PC-9 (cell line): ENCODE measurements at regions of chr16 and their contacts with region 1.

Region 1: GRCh38 chr16:75519881-75520280 is 16.0 kb downstream of the CHST5 start:
- DNase-seq: no peak
- H3K4me3 ChIP-seq: no peak overlapping the region
- H3K27ac ChIP-seq: no peak overlapping the region
- H3K4me1 ChIP-seq: 0 out of 2 replicates have a peak, but pooled peaks cover 6% of the 10 kb centered on the region
- H3K27me3 ChIP-seq: no peaks in the 10 kb centered on the region
- CTCF ChIP-seq: no peak

Region 2: DNA sequence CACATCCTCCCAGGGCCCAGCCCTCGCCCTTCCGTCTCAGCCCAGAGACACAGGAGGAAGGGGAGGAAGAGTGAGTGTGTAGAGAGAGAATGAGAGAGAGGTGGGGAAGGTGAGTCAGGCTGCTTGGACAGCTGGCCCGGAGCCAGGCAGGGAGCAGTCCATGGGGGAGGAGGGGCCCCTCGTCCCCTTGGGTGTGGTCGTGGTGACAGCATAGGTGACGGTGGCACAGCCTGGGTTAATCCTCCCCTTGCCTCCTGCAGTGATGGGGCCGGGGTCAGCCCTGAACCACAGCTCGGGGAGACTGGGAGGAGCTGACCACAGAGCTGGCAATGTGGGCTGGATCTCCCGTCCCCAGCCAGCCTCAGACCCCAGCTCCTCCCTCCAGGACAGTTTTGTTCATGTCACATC is 781.7 kb before region 1 on chr16:
- CTCF ChIA-PET with region 1: interaction called, 20 read pairs
- POLR2A ChIA-PET with region 1: no interaction called
- intact Hi-C with region 1: no loop called
- DNase-seq: peak; percentile 83 to 89
- H3K4me3 ChIP-seq: peak overlapping the region; percentile 15; the same call in 1 of the 2 replicates
- H3K27ac ChIP-seq: peak overlapping the region; percentile 71
- H3K4me1 ChIP-seq: peaks cover 63% of the 10 kb centered on the region
- H3K27me3 ChIP-seq: no peaks in the 10 kb centered on the region
- CTCF ChIP-seq: no peak

Region 3: DNA sequence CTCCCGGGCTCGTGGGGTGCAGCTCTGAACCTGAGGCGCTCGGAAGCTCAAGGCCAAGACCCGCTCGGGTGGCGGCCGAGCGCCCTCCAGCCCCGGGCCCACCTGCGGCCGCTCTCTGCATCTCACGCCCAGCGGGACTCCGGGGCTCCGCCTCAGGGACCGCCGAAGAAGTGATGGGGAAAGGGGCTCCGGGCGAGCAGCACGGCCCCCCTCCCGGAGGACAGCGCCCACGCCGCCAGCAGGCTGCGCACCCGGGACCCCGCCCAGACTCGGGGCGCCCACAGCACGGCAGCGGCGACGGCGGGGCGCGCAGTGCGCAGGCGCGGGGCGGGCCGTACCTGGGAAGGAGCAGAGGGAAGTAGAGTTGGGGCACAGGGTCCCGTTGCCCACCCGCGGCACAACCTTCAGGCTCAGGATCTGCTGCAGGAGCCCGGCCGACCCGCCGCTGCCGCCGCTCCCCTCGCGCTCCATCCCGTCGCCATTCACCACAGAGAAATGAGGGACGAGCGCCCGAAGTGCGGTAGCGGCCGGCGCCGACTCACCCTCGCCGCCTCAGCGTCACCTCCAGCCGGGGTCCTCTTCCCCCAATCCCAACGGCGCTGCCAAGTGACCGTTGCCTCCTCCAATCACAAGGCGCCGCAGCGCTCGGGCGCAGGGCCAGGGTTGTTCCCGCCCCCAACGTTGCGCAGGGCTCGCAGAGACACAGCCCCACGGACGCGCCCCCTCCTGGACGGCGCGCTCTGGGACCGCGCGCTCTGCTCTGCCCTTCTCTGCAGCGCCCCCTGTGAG is 55.6 kb before region 1 on chr16 and contains the start of gene TMEM170A:
- CTCF ChIA-PET with region 1: interaction called, 7 read pairs
- POLR2A ChIA-PET with region 1: no interaction called
- intact Hi-C with region 1: loop called (anchors 1 kb)
- DNase-seq: peak; percentile 91 to 99
- H3K4me3 ChIP-seq: peak within 1 kb of the TSS; percentile 61
- H3K27ac ChIP-seq: peak within 1 kb of the TSS; percentile 45
- H3K4me1 ChIP-seq: peaks cover 18% of the 10 kb centered on the region
- H3K27me3 ChIP-seq: no peaks in the 10 kb centered on the region
- CTCF ChIP-seq: peak; percentile 100
- total RNA-seq, gene TMEM170A: 31.4 and 31.7 TPM in 2 replicates

Region 4: DNA sequence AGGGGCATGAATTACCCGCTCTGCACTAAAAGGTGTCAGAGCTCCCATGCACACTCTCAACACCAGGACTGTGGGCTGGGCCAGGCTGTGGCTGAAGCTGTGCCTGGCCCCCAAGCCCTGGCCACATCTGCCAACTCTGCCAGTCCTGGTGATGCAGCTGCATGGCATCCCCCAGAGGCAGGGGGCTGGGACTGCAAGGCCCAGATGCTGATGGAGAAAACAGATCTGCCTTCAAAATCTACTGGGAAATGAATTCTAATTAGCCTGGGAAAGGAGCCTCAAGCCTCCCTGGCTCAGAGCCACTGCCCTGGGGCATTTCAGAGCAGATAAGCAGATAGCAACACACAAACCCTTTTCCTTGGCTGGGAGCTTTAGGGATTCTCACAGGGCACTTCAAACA is 28.0 kb before region 1 on chr16:
- CTCF ChIA-PET with region 1: interaction called, 3 read pairs
- POLR2A ChIA-PET with region 1: interaction called, 4 read pairs
- intact Hi-C with region 1: loop called (anchors 1 kb)
- DNase-seq: peak; percentile 77 to 88
- H3K4me3 ChIP-seq: no peak overlapping the region
- H3K27ac ChIP-seq: no peak overlapping the region
- H3K4me1 ChIP-seq: peaks cover 24% of the 10 kb centered on the region
- H3K27me3 ChIP-seq: no peaks in the 10 kb centered on the region
- CTCF ChIP-seq: peak; percentile 52

Region 5: DNA sequence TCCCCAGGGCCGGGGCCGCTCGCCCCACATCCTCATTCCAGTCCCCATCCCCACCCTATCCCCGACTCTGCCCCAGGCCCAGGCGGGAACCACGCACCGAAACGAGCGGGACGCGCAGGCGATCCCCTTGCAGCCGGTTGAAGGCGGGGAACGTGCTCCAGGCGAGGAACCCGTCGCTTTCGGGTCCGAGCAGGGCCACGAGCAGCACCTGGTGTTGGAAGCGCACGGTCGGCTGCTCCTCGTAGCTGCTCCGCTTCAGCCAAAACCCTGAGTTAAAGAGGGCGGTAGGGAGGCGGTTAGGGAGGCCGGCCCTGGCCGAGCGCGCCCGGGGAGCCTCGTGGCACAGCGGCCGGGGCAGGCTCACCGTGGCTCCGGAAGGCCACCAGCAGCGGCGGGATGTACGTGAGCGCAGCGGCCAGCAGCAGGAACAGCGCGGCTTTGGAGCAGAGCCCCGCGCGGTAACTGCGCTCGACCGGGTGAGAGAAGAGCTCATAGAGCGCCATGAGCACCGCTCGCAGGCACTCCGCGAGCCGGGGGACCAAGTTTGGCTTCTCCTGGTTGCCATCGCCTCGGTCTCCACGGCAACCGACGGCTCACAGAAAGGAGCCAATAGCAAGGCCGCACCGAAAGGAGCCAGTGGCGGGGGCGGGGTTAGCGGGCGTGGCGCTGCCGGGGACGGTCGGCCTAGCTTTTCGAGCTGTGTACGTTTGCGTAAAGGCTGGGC is 36.0 kb after region 1 on chr16 and contains the start of gene TMEM231:
- CTCF ChIA-PET with region 1: no interaction called
- POLR2A ChIA-PET with region 1: no interaction called
- intact Hi-C with region 1: loop called (anchors 1 kb)
- DNase-seq: peak; percentile 88 to 91
- H3K4me3 ChIP-seq: peak within 1 kb of the TSS; percentile 100
- H3K27ac ChIP-seq: peak within 1 kb of the TSS; percentile 58
- H3K4me1 ChIP-seq: peaks cover 32% of the 10 kb centered on the region
- H3K27me3 ChIP-seq: no peaks in the 10 kb centered on the region
- CTCF ChIP-seq: no peak
- total RNA-seq, gene TMEM231: 17.7 and 18.8 TPM in 2 replicates

Region 6: GRCh38 chr16:75579281-75579834 is 59.5 kb after region 1 on chr16:
- CTCF ChIA-PET with region 1: interaction called, 6 read pairs
- POLR2A ChIA-PET with region 1: interaction called, 13 read pairs
- intact Hi-C with region 1: no loop called
- DNase-seq: no peak
- H3K4me3 ChIP-seq: no peak overlapping the region
- H3K27ac ChIP-seq: no peak overlapping the region
- H3K4me1 ChIP-seq: no peaks in the 10 kb centered on the region
- H3K27me3 ChIP-seq: no peaks in the 10 kb centered on the region
- CTCF ChIP-seq: no peak